Heart right ventricle (tissue), 16 donors: ENCODE measurements at regions of chr13 and their contacts with region 1.

Region 1: GRCh38 chr13:77715233-77715891 is 17.9 kb downstream of the SLAIN1 start:
- DNase-seq: no peak
- ATAC-seq: no peak
- H3K4me3 ChIP-seq: no peak overlapping the region
- H3K27ac ChIP-seq: no peak overlapping the region
- H3K4me1 ChIP-seq: no peaks in the 10 kb centered on the region
- H3K27me3 ChIP-seq: no peaks in the 10 kb centered on the region
- CTCF ChIP-seq: no peak

Region 2: GRCh38 chr13:78299832-78300623 is 584.7 kb after region 1 on chr13:
- intact Hi-C with region 1: loop called in 1 of 10 experiments (anchors 5 kb)
- DNase-seq: no peak
- ATAC-seq: no peak
- H3K4me3 ChIP-seq: no peak overlapping the region
- H3K27ac ChIP-seq: no peak overlapping the region
- H3K4me1 ChIP-seq: no peaks in the 10 kb centered on the region
- H3K27me3 ChIP-seq: no peaks in the 10 kb centered on the region
- CTCF ChIP-seq: no peak